ENCODE measurements at regions of chr19 and their contacts with region 1.

Region 1: DNA sequence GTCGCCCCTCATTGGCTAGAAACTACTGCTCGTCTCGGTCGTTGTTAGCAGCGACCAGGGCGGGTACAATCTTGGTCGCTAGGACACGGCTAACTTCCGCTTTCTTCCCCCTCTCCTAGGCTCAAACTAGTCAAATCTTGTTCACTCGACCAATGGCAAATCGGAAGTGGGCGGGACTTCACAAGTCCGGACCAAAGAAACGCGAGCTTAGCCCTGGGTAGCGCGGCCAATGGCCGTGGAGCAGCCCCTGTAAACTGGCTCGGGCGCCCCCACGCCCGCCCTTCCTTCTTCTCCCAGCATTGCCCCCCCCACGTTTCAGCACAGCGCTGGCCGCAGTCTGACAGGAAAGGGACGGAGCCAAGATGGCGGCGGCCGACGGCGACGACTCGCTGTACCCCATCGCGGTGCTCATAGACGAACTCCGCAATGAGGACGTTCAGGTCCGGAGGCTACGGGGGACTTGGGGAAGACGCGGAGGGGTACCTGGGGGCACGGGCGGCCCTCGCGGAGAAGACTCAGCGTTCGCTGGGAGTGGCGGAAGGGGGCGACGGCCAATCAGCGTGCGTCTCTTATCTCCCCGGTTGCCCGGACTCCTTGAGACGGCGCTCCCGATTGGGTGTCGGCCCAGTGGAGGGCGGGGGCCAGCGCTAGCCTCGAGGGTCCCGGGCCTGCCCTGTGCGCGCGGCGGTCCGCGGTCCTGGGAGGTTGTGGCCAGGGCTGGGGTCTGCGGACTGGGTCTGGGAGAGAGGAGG is at the start of gene PPP2R1A:
- DNase-seq: peak; percentile 99
- ATAC-seq: peak; percentile 93
- H3K4me3 Mint-ChIP-seq: peak within 1 kb of the TSS; percentile 91
- H3K27ac Mint-ChIP-seq: peak within 1 kb of the TSS; percentile 97
- H3K4me1 Mint-ChIP-seq: peaks cover 41% of the 10 kb centered on the region
- H3K27me3 Mint-ChIP-seq: no peaks in the 10 kb centered on the region
- total RNA-seq, gene PPP2R1A: 215 to 231 TPM

Region 2: DNA sequence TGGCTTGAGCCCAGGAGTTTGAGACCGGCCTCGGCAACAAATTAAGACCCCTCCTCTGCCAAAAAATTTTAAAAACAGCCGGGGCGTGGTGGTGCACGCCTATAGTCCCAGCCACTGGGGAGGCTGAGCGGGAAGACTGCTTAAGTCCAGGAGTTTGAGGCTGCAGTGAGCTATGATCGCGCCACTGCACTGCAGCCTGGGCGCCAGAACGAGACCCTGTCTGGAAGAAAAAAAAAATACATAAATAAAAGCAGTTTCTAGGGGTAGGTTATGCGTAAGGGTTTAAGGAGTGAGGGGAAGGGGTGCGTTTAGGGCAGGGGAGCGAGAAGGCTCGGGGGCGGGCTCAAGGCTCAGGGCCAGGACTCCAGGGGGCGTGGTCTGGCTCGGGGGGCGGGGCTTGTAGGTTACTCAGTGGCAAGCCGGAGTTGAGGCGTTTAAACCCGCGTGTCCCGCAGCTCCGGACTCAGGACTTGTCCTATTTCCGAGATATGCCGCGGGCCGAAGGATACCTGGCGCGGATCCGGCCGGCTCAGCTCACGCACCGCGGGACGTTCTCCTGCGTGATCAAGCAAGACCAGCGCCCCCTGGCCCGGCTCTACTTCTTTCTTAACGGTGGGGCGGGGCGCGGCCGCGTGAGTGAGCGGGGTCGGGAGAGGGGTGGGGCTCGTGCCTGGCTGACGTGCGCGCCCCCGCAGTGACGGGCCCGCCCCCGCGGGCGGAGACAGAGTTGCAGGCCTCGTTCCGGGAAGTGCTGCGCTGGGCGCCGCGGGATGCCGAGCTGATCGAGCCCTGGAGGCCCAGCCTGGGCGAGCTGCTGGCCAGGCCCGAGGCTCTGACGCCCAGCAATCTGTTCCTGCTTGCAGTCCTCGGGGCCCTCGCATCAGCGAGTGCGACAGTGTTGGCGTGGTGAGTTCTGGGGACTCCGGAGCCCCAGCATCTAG is 486.1 kb before region 1 on chr19:
- CTCF ChIA-PET with region 1: no interaction called
- POLR2A ChIA-PET with region 1: no interaction called
- intact Hi-C with region 1: loop called in 1 of 2 experiments (anchors 5 kb)
- DNase-seq: peak; percentile 98
- ATAC-seq: peak; percentile 88
- H3K4me3 Mint-ChIP-seq: peak overlapping the region; percentile 94
- H3K27ac Mint-ChIP-seq: peak overlapping the region; percentile 95
- H3K4me1 Mint-ChIP-seq: peaks cover 33% of the 10 kb centered on the region
- H3K27me3 Mint-ChIP-seq: peaks cover 5% of the 10 kb centered on the region

Region 3: GRCh38 chr19:52007806-52008557 is 181.9 kb before region 1 on chr19 and contains the start of gene ZNF615:
- CTCF ChIA-PET with region 1: no interaction called
- POLR2A ChIA-PET with region 1: no interaction called
- intact Hi-C with region 1: loop called in 1 of 2 experiments (anchors 5 kb)
- DNase-seq: peak; percentile 93
- ATAC-seq: peak; percentile 97
- H3K4me3 Mint-ChIP-seq: peak within 1 kb of the TSS; percentile 90
- H3K27ac Mint-ChIP-seq: peak within 1 kb of the TSS; percentile 98
- H3K4me1 Mint-ChIP-seq: peaks cover 15% of the 10 kb centered on the region
- H3K27me3 Mint-ChIP-seq: no peaks in the 10 kb centered on the region
- total RNA-seq, gene ZNF615: 8.7 to 9.0 TPM

Region 4: DNA sequence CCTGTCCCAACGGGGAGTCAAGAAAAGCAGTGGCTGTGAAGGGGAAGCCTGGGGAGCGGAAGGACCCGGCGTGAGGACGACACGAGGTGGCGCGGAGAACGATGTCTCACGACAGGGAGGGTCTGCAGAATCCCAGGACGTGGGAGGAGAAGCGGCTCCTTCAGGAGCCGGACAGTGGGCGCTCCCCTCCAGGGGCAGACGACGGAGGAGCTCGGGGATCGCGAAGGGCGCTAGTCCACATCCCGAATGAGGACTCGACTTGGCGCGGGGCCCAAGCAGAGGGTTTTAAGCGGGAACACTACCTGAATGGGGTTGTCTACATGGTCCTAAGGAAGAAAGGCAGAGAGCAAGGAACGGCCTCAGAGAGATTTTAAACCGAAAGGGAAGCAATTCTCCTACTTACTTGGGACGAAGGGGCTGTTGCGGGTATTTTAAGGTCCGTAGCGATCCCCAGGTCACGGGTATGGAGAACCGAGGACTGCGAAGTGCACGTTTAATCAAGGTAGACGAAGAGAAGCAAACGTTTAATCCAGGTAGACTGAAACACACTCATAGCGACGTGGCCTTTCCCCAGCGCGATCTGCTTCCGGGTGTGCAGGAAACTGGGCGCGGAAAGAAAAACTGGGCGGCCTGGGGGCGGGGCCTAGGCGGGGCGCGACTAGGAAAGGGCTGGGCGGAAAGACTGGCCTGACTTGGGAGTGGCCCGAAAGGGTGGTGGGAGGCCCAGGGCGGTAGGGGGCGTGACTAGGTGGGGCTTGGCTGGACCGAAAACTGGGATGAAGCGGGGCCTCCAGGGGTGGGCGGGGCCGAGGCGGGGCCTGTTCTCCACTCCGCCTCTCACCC is 94.5 kb before region 1 on chr19 and contains the start of gene ZNF841:
- CTCF ChIA-PET with region 1: no interaction called
- POLR2A ChIA-PET with region 1: interaction called, 8 read pairs
- intact Hi-C with region 1: loop called in 1 of 2 experiments (anchors 1 kb)
- DNase-seq: peak; percentile 96
- ATAC-seq: peak; percentile 98
- H3K4me3 Mint-ChIP-seq: peak within 1 kb of the TSS; percentile 94
- H3K27ac Mint-ChIP-seq: peak within 1 kb of the TSS; percentile 95
- H3K4me1 Mint-ChIP-seq: peaks cover 22% of the 10 kb centered on the region
- H3K27me3 Mint-ChIP-seq: no peaks in the 10 kb centered on the region
- total RNA-seq, gene ZNF841: 18.0 to 20.3 TPM

Region 5: GRCh38 chr19:52269338-52270261 is 79.7 kb after region 1 on chr19 and contains the start of gene ZNF766:
- CTCF ChIA-PET with region 1: no interaction called
- POLR2A ChIA-PET with region 1: no interaction called
- intact Hi-C with region 1: loop called in 1 of 2 experiments (anchors 1 kb)
- DNase-seq: peak; percentile 98
- ATAC-seq: peak; percentile 99
- H3K4me3 Mint-ChIP-seq: peak within 1 kb of the TSS; percentile 96
- H3K27ac Mint-ChIP-seq: peak within 1 kb of the TSS; percentile 96
- H3K4me1 Mint-ChIP-seq: peaks cover 35% of the 10 kb centered on the region
- H3K27me3 Mint-ChIP-seq: no peaks in the 10 kb centered on the region
- total RNA-seq, gene ZNF766: 28.6 to 34.2 TPM

Region 6: GRCh38 chr19:52535771-52536447 is 346.0 kb after region 1 on chr19:
- CTCF ChIA-PET with region 1: no interaction called
- POLR2A ChIA-PET with region 1: no interaction called
- intact Hi-C with region 1: loop called in 1 of 2 experiments (anchors 2 kb)
- DNase-seq: peak; percentile 97
- ATAC-seq: peak; percentile 94
- H3K4me3 Mint-ChIP-seq: peak overlapping the region; percentile 83
- H3K27ac Mint-ChIP-seq: peak overlapping the region; percentile 94
- H3K4me1 Mint-ChIP-seq: peaks cover 28% of the 10 kb centered on the region
- H3K27me3 Mint-ChIP-seq: no peaks in the 10 kb centered on the region

Measured in activated CD4-positive, alpha-beta T cell treated with anti-CD3 and anti-CD28 coated beads for 36 hours (primary cell).